A549 (cell line): ENCODE measurements at regions of chr12 and their contacts with region 1.

Region 1: DNA sequence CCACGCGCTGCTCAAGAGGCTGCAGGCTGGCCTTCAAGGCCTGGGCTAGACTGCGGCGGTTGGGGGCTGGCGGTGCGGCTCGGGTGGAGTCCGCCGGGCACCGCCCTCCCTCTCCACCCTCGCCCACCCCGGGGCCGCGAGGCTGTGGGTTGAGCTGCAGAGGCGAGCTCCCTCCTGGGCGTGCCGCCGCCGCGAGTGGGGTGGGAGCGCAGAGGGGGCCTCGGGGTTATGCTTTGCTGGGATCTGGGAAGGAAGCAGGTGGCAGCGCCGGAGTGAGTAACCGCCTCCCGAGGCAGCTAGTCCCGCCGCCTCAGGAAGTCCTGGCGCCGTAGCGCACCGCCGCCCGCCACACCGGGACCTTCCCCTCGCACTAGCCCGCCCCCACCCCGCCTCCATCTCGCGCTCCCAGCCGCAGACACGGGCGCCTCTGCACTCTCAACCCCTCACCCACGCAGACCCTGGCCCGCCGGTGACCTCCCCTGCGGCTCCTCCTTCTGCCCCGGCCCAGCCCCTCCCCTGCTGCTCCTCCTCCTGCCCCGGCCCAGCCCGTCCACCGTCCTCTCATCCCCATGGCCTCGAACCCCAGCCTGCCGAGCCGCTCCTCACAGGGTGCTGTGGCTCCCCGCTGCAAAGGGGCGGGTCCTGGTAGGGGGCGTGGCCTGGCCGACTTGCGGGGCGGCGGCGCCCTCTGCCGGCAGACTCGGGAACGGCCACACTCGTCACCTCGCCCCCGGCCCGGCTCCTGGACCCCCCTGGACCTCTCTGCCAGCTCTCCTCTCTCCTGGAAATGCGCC is 16.6 kb downstream of the TAMALIN start:
- DNase-seq: peak; percentile 94 to 95
- ATAC-seq: peak; percentile 63 to 79
- H3K4me3 ChIP-seq: peak overlapping the region; percentile 71
- H3K27ac ChIP-seq: peak overlapping the region; percentile 83 to 93
- H3K4me1 ChIP-seq: peaks cover 32% of the 10 kb centered on the region
- CTCF ChIP-seq: peak; percentile 93
- EP300 ChIP-seq: no peak
- POLR2A ChIP-seq: peak; percentile 37
- RAD21 ChIP-seq: peak; percentile 88 to 95

Region 2: DNA sequence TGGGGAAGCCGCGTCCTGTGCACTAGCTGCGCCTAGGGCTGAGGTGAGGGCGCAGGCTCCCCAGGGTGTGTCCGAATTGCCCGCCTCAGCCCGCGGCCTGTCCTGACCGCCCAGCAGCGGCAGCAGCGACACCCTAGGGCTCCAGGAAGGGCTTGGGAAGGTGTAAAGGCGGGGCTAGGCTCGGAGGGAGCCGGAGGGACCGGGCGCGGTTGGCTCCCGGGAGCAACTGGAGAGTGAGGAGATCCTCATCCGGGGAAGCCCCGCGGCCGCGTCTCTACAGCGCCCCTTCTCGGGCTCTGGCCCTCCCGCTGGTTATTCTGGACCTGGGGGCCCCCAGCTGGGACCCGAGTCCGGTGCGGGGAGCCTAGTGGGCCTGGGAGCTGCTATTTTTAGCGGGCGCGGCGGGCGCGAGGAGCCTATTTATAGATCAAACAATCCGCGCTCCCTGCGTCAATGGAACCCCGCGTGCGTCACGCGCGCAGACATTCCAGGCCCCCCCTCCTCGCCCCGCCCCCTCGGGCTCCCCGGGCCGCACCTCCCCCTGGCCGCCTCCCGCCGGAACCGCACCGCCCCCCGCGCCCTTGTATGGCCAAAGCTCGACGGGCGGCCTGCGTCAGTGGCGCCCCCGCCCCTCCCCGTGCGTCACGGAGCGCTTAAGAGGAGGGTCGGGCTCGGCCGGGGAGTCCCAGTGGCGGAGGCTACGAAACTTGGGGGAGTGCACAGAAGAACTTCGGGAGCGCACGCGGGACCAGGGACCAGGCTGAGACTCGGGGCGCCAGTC is 27.6 kb after region 1 on chr12 and contains the start of gene NR4A1:
- CTCF ChIA-PET with region 1: interaction called, 1,730 read pairs
- POLR2A ChIA-PET with region 1: interaction called, 16 read pairs
- DNase-seq: peak; percentile 95 to 98
- ATAC-seq: peak; percentile 67 to 68
- H3K4me3 ChIP-seq: peak within 1 kb of the TSS; percentile 75
- H3K27ac ChIP-seq: peak within 1 kb of the TSS; percentile 90 to 95
- H3K4me1 ChIP-seq: peaks cover 38% of the 10 kb centered on the region
- CTCF ChIP-seq: peak; percentile 34
- EP300 ChIP-seq: peak; percentile 71 to 94
- POLR2A ChIP-seq: peak; percentile 94
- RAD21 ChIP-seq: peak in 1 of 2 experiments; percentile 42; a peak in 3 of 5 replicates
- polyA plus RNA-seq, gene NR4A1: 81.3 and 89.6 TPM in 2 replicates

Region 3: DNA sequence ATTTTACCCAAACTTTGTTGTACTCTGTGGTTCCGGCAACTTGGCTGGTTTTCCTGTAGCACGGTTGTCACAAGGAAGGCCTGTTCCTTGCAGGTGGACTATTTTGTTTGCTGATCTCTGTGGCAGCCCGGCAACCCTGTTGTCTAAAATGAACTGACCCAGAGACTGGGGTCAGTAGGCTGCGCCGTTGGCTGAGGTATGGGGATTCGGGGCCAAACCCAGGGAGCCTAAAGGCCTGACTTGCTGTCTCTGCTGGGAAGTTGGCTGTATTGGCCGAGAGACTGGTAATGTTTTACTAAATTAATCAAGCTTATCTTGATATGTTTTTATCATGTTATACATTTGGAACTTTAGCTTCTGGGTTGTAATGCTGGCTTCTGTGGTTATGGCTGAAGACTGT is 70.0 kb after region 1 on chr12:
- CTCF ChIA-PET with region 1: interaction called, 1,730 read pairs
- POLR2A ChIA-PET with region 1: no interaction called
- DNase-seq: no peak
- ATAC-seq: no peak; a peak in 1 of 6 replicates
- H3K4me3 ChIP-seq: no peak overlapping the region
- H3K27ac ChIP-seq: no peak overlapping the region
- H3K4me1 ChIP-seq: no peaks in the 10 kb centered on the region
- CTCF ChIP-seq: no peak
- EP300 ChIP-seq: no peak
- POLR2A ChIP-seq: no peak
- RAD21 ChIP-seq: no peak

Region 4: DNA sequence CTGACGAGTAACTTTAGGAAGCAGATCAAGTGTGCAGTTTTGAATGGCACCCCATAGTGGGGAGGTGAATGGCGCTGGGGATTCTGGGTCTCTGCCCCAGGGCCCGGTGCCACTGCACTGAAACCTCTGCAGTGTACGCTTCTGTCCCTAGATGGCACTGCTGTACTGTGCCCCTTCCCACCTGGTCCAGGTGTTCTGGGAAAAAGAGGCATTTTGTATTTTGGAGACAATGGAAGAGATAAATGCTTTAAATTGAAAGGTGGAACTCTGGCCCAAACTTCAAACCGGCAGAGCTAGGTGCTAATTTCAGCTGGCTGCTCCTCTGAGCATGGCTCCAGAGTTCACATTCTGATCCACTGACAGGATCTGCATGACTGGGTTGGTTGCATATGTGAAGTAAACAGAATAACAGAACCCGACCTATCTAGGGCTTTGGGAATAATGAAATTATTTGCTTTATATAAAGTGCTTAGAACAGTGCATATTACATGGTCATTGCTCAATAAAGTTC is 116.2 kb after region 1 on chr12:
- CTCF ChIA-PET with region 1: interaction called, 15 read pairs
- POLR2A ChIA-PET with region 1: no interaction called
- DNase-seq: peak; percentile 68 to 90
- ATAC-seq: peak; percentile 64 to 66; a peak in 5 of 6 replicates
- H3K4me3 ChIP-seq: no peak overlapping the region
- H3K27ac ChIP-seq: peak overlapping the region; percentile 100; a peak in 5 of 6 replicates
- H3K4me1 ChIP-seq: peaks cover 26% of the 10 kb centered on the region
- CTCF ChIP-seq: peak; percentile 97
- EP300 ChIP-seq: no peak
- POLR2A ChIP-seq: no peak
- RAD21 ChIP-seq: peak; percentile 92 to 97